Activated T-helper 1 cell treated with anti-CD3 and anti-CD28 coated beads, Interleukin-12 subunit alpha, Interleukin-12 subunit beta, Interleukin-2, Interleukin-4 antibody, amounts not matched to agents 30 ng/mL and 10 ng/mL and 1 ng/mL, durations not matched to agents 14 hours and 24 hours and 36 hours (primary cell): ENCODE measurements at regions of chr11 and their contacts with region 1.

Region 1: DNA sequence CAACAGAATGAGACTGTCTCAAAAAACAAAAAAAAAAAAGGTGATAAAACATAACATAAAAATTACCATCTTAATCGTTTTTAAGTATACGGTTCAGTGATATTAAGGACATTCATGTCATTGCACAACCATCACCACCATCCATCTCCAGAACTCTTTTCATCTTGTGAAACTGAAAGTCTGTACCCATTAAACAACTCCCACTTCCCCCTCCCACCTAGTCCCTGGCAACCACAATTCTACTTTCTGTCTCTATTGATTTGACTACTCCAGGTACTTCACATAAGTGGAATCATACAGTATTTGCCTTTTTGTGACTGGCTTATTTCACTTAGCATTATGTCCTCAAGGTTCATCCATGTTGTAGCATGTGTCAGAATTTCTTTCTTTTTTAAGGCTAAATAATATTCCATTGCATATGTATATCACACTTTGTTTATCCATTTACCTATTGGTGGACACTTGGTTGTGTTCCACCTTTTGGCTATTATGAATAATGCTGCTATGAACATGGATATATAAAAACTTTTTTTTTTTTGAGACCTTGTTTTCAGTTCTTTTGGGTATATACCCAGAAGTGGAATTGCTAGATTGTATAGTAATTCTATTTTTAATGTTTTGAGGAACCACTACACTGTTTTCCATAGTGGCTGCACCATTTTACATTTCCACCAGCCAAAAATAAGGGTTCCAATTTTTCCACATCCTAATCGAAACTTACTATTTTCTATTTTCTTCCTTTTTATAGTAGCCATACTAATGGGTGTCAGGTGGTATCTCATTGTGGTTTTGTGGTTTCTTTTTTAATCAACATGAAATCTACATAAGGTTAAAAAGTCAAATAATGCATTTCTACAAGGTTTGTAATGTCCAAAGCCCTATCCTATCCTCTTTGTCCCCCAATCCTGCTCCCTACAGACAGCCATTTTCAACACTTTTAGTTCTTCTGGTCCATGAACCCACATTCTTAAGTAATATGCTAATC is 23.4 kb upstream of the PIK3C2A start:
- DNase-seq: peak; percentile 44
- H3K4me3 Mint-ChIP-seq: no peak overlapping the region
- H3K27ac Mint-ChIP-seq: peak overlapping the region; percentile 77
- H3K4me1 Mint-ChIP-seq: peaks cover 20% of the 10 kb centered on the region
- H3K27me3 Mint-ChIP-seq: peaks cover 36% of the 10 kb centered on the region

Region 2: DNA sequence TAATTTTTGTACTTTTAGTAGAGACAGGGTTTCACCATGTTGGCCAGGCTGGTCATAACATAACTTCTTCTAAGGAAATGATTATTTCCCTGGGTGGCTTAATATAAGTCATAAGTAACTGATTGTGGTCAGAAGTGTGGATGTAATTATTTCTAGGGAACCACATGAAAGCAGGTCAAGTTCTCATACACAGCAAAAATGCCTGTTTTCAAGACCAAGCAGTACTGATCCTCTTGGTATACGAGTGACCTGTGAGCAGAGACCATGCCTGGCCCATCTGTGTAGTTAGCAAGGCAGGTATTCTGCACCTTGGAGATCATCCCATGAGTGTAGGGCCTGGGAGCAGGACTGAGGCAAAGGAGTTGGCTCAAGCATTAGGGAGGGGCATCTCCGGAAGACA is 12.9 kb after region 1 on chr11:
- intact Hi-C with region 1: loop called (anchors 1 kb)
- DNase-seq: no peak
- H3K4me3 Mint-ChIP-seq: no peak overlapping the region
- H3K27ac Mint-ChIP-seq: no peak overlapping the region
- H3K4me1 Mint-ChIP-seq: peaks cover 4% of the 10 kb centered on the region
- H3K27me3 Mint-ChIP-seq: peaks cover 49% of the 10 kb centered on the region

Region 3: GRCh38 chr11:17298302-17298701 is 67.1 kb after region 1 on chr11:
- intact Hi-C with region 1: loop called (anchors 1 kb)
- DNase-seq: peak; percentile 23
- H3K4me3 Mint-ChIP-seq: no peak overlapping the region
- H3K27ac Mint-ChIP-seq: peak overlapping the region; percentile 64
- H3K4me1 Mint-ChIP-seq: peaks cover 31% of the 10 kb centered on the region
- H3K27me3 Mint-ChIP-seq: no peaks in the 10 kb centered on the region

Region 4: GRCh38 chr11:17314904-17315426 is 83.8 kb after region 1 on chr11:
- intact Hi-C with region 1: no loop called
- DNase-seq: no peak
- H3K4me3 Mint-ChIP-seq: no peak overlapping the region
- H3K27ac Mint-ChIP-seq: no peak overlapping the region
- H3K4me1 Mint-ChIP-seq: no peaks in the 10 kb centered on the region
- H3K27me3 Mint-ChIP-seq: no peaks in the 10 kb centered on the region

Region 5: GRCh38 chr11:17384002-17384511 is 152.9 kb after region 1 on chr11:
- intact Hi-C with region 1: loop called (anchors 1 kb)
- DNase-seq: peak; percentile 50
- H3K4me3 Mint-ChIP-seq: no peak overlapping the region
- H3K27ac Mint-ChIP-seq: no peak overlapping the region
- H3K4me1 Mint-ChIP-seq: no peaks in the 10 kb centered on the region
- H3K27me3 Mint-ChIP-seq: peaks cover 11% of the 10 kb centered on the region

Region 6: GRCh38 chr11:17528181-17528691 is 297.1 kb after region 1 on chr11:
- intact Hi-C with region 1: loop called (anchors 1 kb)
- DNase-seq: peak; percentile 3
- H3K4me3 Mint-ChIP-seq: no peak overlapping the region
- H3K27ac Mint-ChIP-seq: no peak overlapping the region
- H3K4me1 Mint-ChIP-seq: no peaks in the 10 kb centered on the region
- H3K27me3 Mint-ChIP-seq: no peaks in the 10 kb centered on the region